ENCODE measurements at regions of chr14 and their contacts with region 1.

Region 1: DNA sequence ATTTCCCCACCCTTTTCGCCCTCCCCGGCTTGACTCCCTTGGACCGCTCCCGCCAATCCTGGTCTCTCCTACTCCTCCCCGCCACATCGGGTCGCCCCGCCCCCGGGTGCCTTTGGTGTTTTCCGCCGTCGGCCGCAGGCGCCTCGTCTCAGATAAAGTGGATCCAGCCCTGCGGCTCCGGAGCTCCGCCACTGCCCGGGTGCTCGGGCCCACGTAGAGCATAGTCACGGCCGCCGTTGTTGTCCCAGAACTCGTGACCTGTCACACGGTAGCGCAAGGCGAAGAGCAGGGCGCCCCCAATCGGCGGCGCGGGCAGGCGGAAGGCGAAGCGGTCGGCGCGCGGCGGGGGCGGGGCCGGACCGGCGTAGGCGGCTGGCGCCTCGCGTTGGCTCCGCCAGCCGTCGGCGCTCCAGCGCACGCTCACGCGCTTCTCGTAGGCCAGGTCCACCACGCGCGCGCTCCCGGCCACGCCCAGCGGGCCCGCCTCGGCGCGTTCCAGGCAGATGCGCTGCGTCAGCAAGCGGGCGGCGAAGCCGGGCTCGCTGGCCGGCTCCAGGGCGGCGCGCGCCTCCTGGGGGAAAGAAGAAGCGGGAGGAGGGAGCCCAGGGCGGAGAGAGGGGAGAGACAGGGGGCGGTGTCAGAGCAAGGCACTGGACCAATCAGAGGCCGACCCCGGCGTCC is 1.2 kb downstream of the PPP1R3E start:
- DNase-seq: peak; percentile 91 to 100 (median 96)
- ATAC-seq: peak; percentile 69
- H3K4me3 ChIP-seq: peak overlapping the region; percentile 75
- H3K4me3 Mint-ChIP-seq: peak overlapping the region; percentile 96
- H3K27ac ChIP-seq: peak overlapping the region; percentile 97
- H3K27ac Mint-ChIP-seq: peak overlapping the region; percentile 97
- H3K4me1 ChIP-seq: peaks cover 30% of the 10 kb centered on the region
- H3K4me1 Mint-ChIP-seq: peaks cover 39% of the 10 kb centered on the region
- H3K27me3 ChIP-seq: peaks cover 7 to 8% of the 10 kb centered on the region in 2 experiments
- H3K27me3 Mint-ChIP-seq: peaks cover 15% of the 10 kb centered on the region
- CTCF ChIP-seq: peak; percentile 65

Region 2: DNA sequence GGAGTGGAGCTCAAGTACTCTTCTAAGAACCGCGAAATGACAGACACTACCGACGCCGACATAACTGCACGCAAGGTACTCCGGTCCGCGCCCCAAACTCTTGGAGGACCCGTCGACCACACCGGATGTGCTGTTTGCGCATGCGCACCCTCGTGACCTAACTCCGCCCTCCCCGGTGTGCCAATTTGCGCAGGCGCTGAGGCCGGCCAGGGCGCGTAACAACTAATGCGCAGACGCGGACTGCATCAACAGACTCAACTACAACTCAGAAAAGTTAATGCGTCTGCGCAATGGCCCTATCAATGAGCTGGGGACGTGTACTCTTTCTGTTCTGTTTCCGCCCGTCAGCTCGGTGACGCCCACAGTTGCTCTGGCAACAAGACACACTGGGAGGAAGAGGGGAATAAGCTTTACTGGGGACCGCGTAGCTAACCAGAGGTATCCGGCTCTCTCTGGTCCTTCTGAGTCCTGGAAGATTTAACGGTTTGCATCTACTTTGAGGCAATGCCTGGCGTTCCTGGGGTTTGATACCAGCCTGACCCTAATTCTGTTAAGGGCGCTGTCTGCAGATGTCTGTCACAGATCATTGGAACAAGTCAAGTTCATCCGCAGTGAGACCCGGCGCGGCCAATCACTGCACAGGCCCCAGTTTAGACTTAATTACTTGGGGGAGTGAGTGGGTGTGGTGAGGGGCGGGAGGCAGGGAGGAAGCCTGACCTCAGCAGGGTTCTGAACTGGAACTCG is 712.2 kb before region 1 on chr14 and contains the start of gene DAD1:
- CTCF ChIA-PET with region 1: no interaction called
- POLR2A ChIA-PET with region 1: interaction called, 4 read pairs
- intact Hi-C with region 1: loop called in 1 of 2 experiments (anchors 5 kb)
- DNase-seq: peak; percentile 98 to 100 (median 100)
- ATAC-seq: peak; percentile 87
- H3K4me3 ChIP-seq: peak within 1 kb of the TSS; percentile 82
- H3K4me3 Mint-ChIP-seq: peak within 1 kb of the TSS; percentile 96
- H3K27ac ChIP-seq: peak within 1 kb of the TSS; percentile 92 to 96
- H3K27ac Mint-ChIP-seq: peak within 1 kb of the TSS; percentile 98
- H3K4me1 ChIP-seq: peaks cover 39% of the 10 kb centered on the region
- H3K4me1 Mint-ChIP-seq: peaks cover 60% of the 10 kb centered on the region
- H3K27me3 ChIP-seq: no peaks in the 10 kb centered on the region
- H3K27me3 Mint-ChIP-seq: no peaks in the 10 kb centered on the region
- CTCF ChIP-seq: no peak
- total RNA-seq, gene DAD1: 41.8 to 44.1 TPM

Region 3: DNA sequence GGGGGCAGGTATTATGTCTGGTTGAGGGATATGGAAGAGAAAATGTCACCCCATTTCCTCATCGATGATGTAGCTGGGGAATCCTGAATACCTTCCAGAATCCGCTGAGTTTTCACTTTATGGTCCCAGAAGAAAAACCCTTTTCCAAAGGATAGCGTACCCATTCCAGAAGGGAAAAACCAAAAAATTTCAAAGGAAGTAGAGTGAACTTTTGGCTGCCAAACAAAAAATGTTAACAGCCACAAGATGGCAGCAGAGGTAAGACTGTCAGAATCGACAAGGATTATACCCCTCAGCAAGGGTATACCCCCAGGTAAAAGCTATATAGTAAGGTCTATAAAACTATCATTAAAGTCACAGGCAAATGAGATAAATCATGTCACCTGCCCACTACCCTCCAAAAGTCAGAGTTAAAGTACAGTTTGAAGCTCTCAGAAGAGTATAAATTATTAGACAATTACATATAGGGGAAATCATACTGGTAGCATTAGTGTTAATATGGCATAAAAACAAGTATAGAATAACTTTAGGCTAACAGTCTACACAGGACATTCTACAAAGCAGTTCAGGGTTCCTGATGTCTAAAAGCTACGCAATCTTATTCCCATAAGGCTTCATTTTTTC is 224.5 kb before region 1 on chr14:
- CTCF ChIA-PET with region 1: interaction called, 3 read pairs
- POLR2A ChIA-PET with region 1: interaction called, 3 read pairs
- intact Hi-C with region 1: loop called (anchors 5 kb)
- DNase-seq: peak in 4 of 14 experiments; percentile 38 to 72 (median 56)
- ATAC-seq: peak; percentile 79
- H3K4me3 ChIP-seq: no peak overlapping the region
- H3K4me3 Mint-ChIP-seq: no peak overlapping the region
- H3K27ac ChIP-seq: no peak overlapping the region
- H3K27ac Mint-ChIP-seq: peak overlapping the region; percentile 22
- H3K4me1 ChIP-seq: peaks cover 4% of the 10 kb centered on the region
- H3K4me1 Mint-ChIP-seq: peaks cover 10% of the 10 kb centered on the region
- H3K27me3 ChIP-seq: no peaks in the 10 kb centered on the region
- H3K27me3 Mint-ChIP-seq: no peaks in the 10 kb centered on the region
- CTCF ChIP-seq: peak; percentile 68

Region 4: GRCh38 chr14:23269193-23269592 is 32.2 kb before region 1 on chr14:
- CTCF ChIA-PET with region 1: interaction called, 4 read pairs
- POLR2A ChIA-PET with region 1: interaction called, 4 read pairs
- intact Hi-C with region 1: loop called (anchors 1 to 2 kb)
- DNase-seq: no peak
- ATAC-seq: no peak
- H3K4me3 ChIP-seq: no peak overlapping the region
- H3K4me3 Mint-ChIP-seq: no peak overlapping the region
- H3K27ac ChIP-seq: no peak overlapping the region
- H3K27ac Mint-ChIP-seq: no peak overlapping the region
- H3K4me1 ChIP-seq: no peaks in the 10 kb centered on the region
- H3K4me1 Mint-ChIP-seq: no peaks in the 10 kb centered on the region
- H3K27me3 ChIP-seq: peaks cover 0 to 4% of the 10 kb centered on the region in 2 experiments
- H3K27me3 Mint-ChIP-seq: peaks cover 17% of the 10 kb centered on the region
- CTCF ChIP-seq: no peak

Region 5: DNA sequence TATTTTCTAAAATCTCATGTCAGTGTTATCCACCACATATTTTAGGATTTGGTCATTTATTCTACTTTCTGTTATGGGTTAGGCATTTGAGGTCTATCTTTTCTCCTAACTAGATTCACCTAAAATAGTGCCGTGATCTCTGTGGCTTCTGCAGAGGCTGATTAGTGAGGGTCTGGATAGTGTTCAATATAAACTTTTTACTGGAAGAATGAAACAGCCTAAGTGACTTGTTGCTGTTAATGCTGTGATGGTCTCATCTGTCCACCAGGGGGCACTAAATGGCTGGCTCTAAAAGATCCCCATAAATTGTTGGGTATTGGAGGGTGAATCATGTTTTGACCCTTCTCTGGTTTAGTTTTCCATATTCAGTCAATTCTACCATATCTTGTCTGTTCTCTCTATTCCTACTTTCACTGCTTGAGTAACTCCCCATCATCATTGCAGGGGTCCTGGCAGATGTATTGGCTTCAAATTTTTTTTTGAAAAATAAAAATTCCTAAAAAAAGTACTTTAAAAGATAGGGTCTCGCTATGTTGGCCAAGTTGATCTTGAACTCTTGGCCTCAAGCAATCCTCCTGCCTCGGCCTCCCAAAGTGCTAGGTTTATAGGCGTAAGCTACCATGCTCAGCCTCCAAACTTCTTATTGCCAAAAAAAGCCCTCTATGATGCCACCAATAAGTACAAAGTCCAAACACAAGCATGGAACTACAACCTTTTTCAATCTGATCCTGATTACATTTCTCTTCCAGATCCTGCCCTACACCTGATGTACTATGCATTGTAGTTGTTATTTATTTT is 26.7 kb after region 1 on chr14:
- CTCF ChIA-PET with region 1: interaction called, 66 read pairs
- POLR2A ChIA-PET with region 1: interaction called, 455 read pairs
- intact Hi-C with region 1: no loop called
- DNase-seq: peak; percentile 32 to 84 (median 54)
- ATAC-seq: peak; percentile 78
- H3K4me3 ChIP-seq: no peak overlapping the region
- H3K4me3 Mint-ChIP-seq: peak overlapping the region; percentile 36
- H3K27ac ChIP-seq: no peak overlapping the region
- H3K27ac Mint-ChIP-seq: no peak overlapping the region
- H3K4me1 ChIP-seq: peaks cover 9% of the 10 kb centered on the region
- H3K4me1 Mint-ChIP-seq: peaks cover 8% of the 10 kb centered on the region
- H3K27me3 ChIP-seq: no peaks in the 10 kb centered on the region
- H3K27me3 Mint-ChIP-seq: no peaks in the 10 kb centered on the region
- CTCF ChIP-seq: peak; percentile 96

Region 6: DNA sequence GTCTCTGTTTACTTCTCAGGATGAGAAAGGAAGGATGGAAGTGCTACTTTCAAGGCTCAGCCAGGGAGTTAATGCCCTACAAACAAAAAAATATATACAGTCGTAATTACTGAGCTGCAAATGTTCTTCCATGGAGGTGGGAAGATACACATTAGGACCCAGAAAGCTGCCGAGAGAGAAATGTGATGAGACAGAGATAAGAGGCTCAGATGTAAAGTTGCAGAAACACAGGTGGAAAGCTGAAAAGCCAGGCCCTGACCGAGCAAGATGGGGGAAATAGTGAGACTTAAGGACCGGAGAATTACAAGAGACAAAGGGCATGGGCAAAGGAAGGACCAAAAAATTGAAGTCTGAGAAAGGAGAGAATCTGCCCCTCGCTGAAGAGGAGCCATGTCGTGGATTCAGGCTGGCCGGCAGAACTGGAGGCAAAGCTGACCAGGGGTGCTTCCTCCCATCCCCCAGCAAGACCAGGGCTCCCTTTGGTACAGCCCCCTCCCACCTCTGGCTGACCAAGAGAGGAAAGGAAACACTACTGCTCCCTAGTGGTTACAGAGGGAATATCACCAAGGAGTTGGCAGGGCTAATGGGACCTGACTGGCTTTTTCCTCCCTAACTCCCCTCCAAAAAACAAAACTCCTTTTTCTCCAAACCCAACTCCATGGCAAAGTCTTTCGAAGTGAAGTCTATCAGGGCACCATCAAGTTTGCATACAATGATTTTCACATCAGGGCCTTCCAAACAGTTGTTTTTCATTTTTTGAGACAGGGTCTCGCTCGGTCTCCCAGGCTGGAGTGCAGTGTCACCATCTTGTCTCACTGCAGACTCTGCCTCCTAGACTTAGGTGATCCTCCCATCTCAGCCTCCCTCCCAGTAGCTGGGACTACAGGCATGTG is 238.1 kb after region 1 on chr14:
- CTCF ChIA-PET with region 1: no interaction called
- POLR2A ChIA-PET with region 1: no interaction called
- intact Hi-C with region 1: no loop called
- DNase-seq: peak in 5 of 14 experiments; percentile 10 to 69 (median 55)
- ATAC-seq: peak; percentile 78
- H3K4me3 ChIP-seq: no peak overlapping the region
- H3K4me3 Mint-ChIP-seq: no peak overlapping the region
- H3K27ac ChIP-seq: no peak overlapping the region
- H3K27ac Mint-ChIP-seq: no peak overlapping the region
- H3K4me1 ChIP-seq: peaks cover 4% of the 10 kb centered on the region
- H3K4me1 Mint-ChIP-seq: no peaks in the 10 kb centered on the region
- H3K27me3 ChIP-seq: no peaks in the 10 kb centered on the region
- H3K27me3 Mint-ChIP-seq: peaks cover 5% of the 10 kb centered on the region
- CTCF ChIP-seq: peak; percentile 78

Region 7: DNA sequence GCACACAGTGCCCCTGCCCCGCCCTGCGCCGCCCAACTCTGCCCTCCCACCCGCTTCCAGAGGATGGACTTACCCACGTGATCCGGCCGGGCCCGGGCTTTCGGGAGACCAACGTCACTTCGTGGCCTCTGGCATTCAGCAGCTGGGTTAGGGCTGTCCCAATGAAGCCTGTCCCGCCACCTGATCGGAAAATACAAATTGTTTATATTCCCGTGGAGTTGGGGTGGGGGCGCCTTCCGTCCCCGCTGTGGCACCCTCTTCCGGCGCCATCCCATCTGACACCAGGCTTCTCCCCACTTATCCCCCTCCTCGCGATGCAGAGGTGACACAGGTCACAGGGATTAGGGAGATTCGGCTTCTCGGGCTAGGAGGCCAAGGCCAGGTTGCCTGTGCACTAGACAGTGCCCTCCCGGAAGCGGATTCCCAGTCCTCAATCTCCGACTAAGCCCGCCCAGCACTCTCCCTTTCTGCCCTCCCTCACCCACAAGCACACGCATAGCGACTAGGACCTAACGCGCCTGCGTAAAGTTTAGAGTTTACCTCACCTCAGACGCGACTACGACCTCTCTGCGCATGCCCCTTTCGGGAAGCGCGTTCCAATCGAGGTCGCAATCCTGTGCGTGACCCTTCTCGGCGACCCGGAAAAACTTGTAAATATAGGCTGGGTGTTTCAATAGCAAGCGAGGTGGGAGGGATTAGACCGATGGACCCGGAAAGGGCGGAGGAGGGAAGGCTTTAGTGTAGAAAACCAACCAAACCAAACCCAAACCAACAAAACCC is 1141.0 kb after region 1 on chr14 and contains the start of gene SDR39U1:
- CTCF ChIA-PET with region 1: no interaction called
- POLR2A ChIA-PET with region 1: no interaction called
- intact Hi-C with region 1: loop called in 1 of 2 experiments (anchors 10 kb)
- DNase-seq: peak; percentile 90 to 100 (median 96)
- ATAC-seq: peak; percentile 86
- H3K4me3 ChIP-seq: peak within 1 kb of the TSS; percentile 88
- H3K4me3 Mint-ChIP-seq: peak within 1 kb of the TSS; percentile 88
- H3K27ac ChIP-seq: peak within 1 kb of the TSS; percentile 93 to 99
- H3K27ac Mint-ChIP-seq: peak within 1 kb of the TSS; percentile 90
- H3K4me1 ChIP-seq: peaks cover 32% of the 10 kb centered on the region
- H3K4me1 Mint-ChIP-seq: peaks cover 53% of the 10 kb centered on the region
- H3K27me3 ChIP-seq: no peaks in the 10 kb centered on the region
- H3K27me3 Mint-ChIP-seq: no peaks in the 10 kb centered on the region
- CTCF ChIP-seq: no peak
- total RNA-seq, gene SDR39U1: 71.7 to 74.7 TPM